ENCODE measurements at regions of chr7 and their contacts with region 1.

Region 1: GRCh38 chr7:151008511-151009323 is 15.6 kb downstream of the ATG9B start:
- DNase-seq: peak; percentile 75 to 99
- H3K4me3 ChIP-seq: peak overlapping the region in 1 of 4 experiments; percentile 27; a peak in 1 of 8 replicates
- H3K27ac ChIP-seq: no peak overlapping the region
- H3K4me1 ChIP-seq: peaks cover 0 to 28% (median 22%) of the 10 kb centered on the region in 4 experiments; a peak in 6 of 7 replicates
- H3K27me3 ChIP-seq: peaks cover 0 to 3% (median 0%) of the 10 kb centered on the region in 4 experiments; a peak in 2 of 7 replicates
- CTCF ChIP-seq: peak in 2 of 3 experiments; percentile 90 to 92; a peak in 3 of 4 replicates
- EP300 ChIP-seq: 0 out of 3 replicates have a peak, but pooled peaks of 1 of the 2 experiments have one; percentile 22
- POLR2A ChIP-seq: no peak
- RAD21 ChIP-seq: peak; percentile 21 to 53; a peak in 3 of 4 replicates

Region 2: GRCh38 chr7:150703209-150703608 is 305.5 kb before region 1 on chr7:
- CTCF ChIA-PET with region 1: no interaction called
- POLR2A ChIA-PET with region 1: no interaction called
- DNase-seq: no peak
- H3K4me3 ChIP-seq: no peak overlapping the region
- H3K27ac ChIP-seq: no peak overlapping the region
- H3K4me1 ChIP-seq: no peaks in the 10 kb centered on the region
- H3K27me3 ChIP-seq: no peaks in the 10 kb centered on the region
- CTCF ChIP-seq: no peak
- EP300 ChIP-seq: no peak
- POLR2A ChIP-seq: no peak
- RAD21 ChIP-seq: no peak

Region 3: GRCh38 chr7:150927956-150928344 is 80.8 kb before region 1 on chr7:
- CTCF ChIA-PET with region 1: no interaction called
- POLR2A ChIA-PET with region 1: no interaction called
- DNase-seq: no peak
- H3K4me3 ChIP-seq: no peak overlapping the region
- H3K27ac ChIP-seq: no peak overlapping the region
- H3K4me1 ChIP-seq: no peaks in the 10 kb centered on the region
- H3K27me3 ChIP-seq: no peaks in the 10 kb centered on the region
- CTCF ChIP-seq: no peak
- EP300 ChIP-seq: no peak
- POLR2A ChIP-seq: no peak
- RAD21 ChIP-seq: no peak

Region 4: DNA sequence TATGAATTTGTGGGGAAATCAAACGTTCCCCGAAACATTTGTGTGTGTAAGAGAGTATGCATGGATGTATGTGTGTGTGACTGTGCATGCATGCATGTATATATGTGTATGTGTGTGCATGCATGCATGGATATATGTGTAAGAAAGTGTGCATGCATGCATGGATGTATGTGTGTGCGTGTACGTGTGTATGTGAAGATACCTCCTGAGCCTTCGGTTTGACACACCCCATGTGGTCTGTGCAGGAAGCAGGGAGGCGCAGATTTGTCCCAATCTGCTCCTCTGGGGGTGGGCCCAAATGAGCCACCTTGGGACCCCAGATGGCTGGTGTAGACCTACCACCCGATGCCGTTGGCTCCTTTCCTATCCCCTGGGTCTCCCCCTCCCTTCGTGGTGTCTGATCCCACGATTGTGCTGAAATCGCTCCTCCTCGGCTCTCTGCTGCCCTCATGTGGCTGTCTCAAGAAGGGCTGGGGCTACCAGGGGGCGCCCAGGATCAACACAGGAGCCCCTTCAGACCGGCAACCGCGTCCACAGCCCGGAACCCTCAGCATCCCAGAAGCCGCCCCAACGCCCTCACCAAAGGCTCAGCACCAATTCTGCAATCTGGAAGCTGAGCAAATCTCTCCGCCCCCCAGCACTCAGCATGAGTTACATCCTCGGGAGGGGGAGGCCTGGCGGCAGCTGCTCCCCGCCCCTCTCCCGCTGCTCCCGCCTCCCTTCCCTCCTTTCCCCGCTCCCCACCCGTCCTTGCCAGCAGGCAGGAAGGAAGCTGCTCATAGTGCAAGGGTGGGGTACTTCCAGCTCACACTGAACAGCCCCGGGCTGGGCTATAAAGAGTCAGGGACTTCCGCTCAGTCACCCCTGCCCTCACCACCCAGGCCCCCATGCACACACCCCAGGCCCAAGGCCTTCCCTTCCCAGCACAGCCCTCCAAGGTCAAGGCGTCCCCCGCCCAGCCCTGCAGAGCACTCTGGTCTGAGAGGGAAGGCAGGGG is 20.2 kb before region 1 on chr7:
- CTCF ChIA-PET with region 1: interaction called, 142 read pairs
- POLR2A ChIA-PET with region 1: interaction called, 7 read pairs
- DNase-seq: peak in 1 of 2 experiments; percentile 98
- H3K4me3 ChIP-seq: peak overlapping the region in 3 of 4 experiments; percentile 30 to 55 (median 42); a peak in 7 of 8 replicates
- H3K27ac ChIP-seq: no peak overlapping the region; the same call in 1 of the 2 replicates
- H3K4me1 ChIP-seq: peaks cover 4 to 17% (median 11%) of the 10 kb centered on the region in 4 experiments
- H3K27me3 ChIP-seq: no peaks in the 10 kb centered on the region
- CTCF ChIP-seq: peak in 2 of 3 experiments; percentile 92 to 97; a peak in 3 of 4 replicates
- EP300 ChIP-seq: no peak
- POLR2A ChIP-seq: no peak
- RAD21 ChIP-seq: peak; percentile 89 to 96

Region 5: DNA sequence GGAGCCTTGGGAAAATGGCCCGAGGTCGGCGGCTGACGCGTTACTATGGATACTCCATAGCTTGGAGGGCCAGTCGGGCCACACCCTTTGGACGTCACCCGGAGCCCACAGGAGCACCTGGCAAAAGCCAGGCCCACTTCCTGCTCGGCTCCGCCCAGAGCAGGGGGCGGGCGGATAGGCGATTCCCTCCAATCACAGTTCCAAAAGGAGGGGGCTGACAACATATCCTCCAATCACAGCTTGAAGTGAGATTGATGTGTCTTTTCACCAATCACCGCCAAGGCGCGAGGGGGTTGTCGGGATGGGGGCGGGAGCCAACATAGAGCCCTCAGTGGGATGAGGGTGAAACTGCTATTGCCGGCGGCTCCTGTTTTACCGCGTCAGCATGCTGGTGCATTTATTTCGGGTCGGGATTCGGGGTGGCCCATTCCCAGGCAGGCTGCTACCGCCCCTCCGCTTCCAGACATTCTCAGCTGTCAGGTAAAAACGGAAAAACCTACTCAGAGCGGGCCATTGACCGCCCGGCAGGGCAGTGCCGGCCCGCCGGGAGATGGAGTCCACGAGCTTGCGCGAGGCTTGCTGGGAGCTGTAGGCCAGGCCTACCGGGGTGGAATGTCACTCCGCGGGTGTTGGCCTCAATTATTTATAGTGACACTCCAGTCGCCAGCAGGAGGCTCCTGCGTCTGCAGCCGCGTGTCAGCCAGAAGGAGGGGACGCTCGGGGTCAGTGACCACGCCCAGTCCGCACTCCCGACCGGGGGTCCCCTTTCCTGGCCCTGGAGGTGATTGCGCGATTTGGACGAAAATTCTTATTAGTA is 19.6 kb after region 1 on chr7 and contains the start of gene ABCB8:
- CTCF ChIA-PET with region 1: interaction called, 116 read pairs
- POLR2A ChIA-PET with region 1: interaction called, 7 read pairs
- DNase-seq: peak; percentile 99
- H3K4me3 ChIP-seq: peak within 1 kb of the TSS; percentile 66 to 97 (median 80)
- H3K27ac ChIP-seq: peak within 1 kb of the TSS; percentile 15; the same call in 1 of the 2 replicates
- H3K4me1 ChIP-seq: peaks cover 0 to 4% (median 2%) of the 10 kb centered on the region in 4 experiments; a peak in 2 of 7 replicates
- H3K27me3 ChIP-seq: peaks cover 0 to 4% (median 0%) of the 10 kb centered on the region in 4 experiments; a peak in 2 of 7 replicates
- CTCF ChIP-seq: peak; percentile 23 to 43 (median 30)
- EP300 ChIP-seq: no peak
- POLR2A ChIP-seq: no peak
- RAD21 ChIP-seq: peak; percentile 21 to 51; a peak in 3 of 4 replicates
- total RNA-seq, gene ABCB8: 22.2 and 27.0 TPM in 2 replicates

Region 6: GRCh38 chr7:151051108-151051507 is 42.4 kb after region 1 on chr7:
- CTCF ChIA-PET with region 1: interaction called, 25 read pairs
- POLR2A ChIA-PET with region 1: no interaction called
- DNase-seq: peak in 1 of 2 experiments; percentile 92
- H3K4me3 ChIP-seq: peak overlapping the region in 1 of 4 experiments; percentile 39; a peak in 2 of 8 replicates
- H3K27ac ChIP-seq: no peak overlapping the region
- H3K4me1 ChIP-seq: peaks cover 0 to 8% (median 5%) of the 10 kb centered on the region in 4 experiments; a peak in 3 of 7 replicates
- H3K27me3 ChIP-seq: peaks cover 4 to 33% (median 26%) of the 10 kb centered on the region in 4 experiments
- CTCF ChIP-seq: peak in 1 of 3 experiments; percentile 4; a peak in 1 of 4 replicates
- EP300 ChIP-seq: peak in 1 of 2 experiments; percentile 79; a peak in 2 of 3 replicates
- POLR2A ChIP-seq: no peak
- RAD21 ChIP-seq: peak in 1 of 2 experiments; percentile 20; a peak in 1 of 4 replicates

Region 7: GRCh38 chr7:151291206-151291605 is 282.5 kb after region 1 on chr7:
- CTCF ChIA-PET with region 1: no interaction called
- POLR2A ChIA-PET with region 1: no interaction called
- DNase-seq: no peak
- H3K4me3 ChIP-seq: no peak overlapping the region
- H3K27ac ChIP-seq: no peak overlapping the region
- H3K4me1 ChIP-seq: no peaks in the 10 kb centered on the region
- H3K27me3 ChIP-seq: peaks cover 0 to 3% (median 1%) of the 10 kb centered on the region in 4 experiments; a peak in 4 of 7 replicates
- CTCF ChIP-seq: no peak
- EP300 ChIP-seq: no peak
- POLR2A ChIP-seq: no peak
- RAD21 ChIP-seq: no peak

Measured in H1 (cell line).